ENCODE measurements at regions of chr19 and their contacts with region 1.

Region 1: DNA sequence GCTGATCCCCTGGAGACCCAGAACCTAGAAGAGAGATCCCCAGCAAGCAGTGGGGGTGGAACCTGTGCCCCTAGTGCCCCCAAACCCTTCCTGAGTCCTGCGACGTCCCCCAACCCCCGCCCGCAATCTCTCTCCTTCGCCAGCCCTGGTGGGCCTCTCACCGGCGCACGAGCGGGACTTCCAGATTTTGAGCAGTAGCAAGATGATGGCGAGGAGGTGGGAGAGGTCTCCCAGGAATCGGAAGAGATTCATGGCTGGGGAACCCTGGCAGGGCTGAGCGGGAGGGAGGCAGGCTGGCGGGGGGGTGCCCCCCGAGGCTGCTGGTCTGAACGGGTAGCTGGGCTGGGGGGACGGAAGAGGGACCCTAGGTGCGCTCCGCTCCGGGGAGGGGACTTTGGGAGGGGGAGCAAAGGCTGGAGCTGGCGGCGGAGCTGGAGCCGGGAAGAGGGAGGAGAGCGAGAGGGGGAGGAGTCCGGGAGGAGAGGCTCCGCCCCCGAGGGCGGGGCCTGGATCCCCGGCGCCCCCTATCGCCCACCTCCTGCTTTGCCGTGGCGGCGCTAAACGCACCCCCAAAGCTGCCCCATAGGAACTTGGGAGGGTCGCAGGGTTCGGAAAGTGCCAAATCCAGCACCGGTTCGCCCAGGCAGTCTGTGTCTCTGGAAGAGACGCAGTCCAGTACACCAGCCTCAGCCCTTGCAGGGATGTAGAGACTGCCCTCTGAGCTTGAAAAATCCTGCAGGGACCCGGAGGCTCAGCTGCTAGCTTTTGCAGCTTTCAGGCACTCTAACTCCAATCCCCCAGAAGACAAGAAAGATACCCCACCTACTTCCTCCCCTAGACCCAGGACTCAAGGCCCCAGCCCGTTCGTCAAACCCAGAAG is at the start of gene KDELR1:
- DNase-seq: peak; percentile 82
- ATAC-seq: peak; percentile 97
- total RNA-seq, gene KDELR1: 69.5 TPM

Region 2: DNA sequence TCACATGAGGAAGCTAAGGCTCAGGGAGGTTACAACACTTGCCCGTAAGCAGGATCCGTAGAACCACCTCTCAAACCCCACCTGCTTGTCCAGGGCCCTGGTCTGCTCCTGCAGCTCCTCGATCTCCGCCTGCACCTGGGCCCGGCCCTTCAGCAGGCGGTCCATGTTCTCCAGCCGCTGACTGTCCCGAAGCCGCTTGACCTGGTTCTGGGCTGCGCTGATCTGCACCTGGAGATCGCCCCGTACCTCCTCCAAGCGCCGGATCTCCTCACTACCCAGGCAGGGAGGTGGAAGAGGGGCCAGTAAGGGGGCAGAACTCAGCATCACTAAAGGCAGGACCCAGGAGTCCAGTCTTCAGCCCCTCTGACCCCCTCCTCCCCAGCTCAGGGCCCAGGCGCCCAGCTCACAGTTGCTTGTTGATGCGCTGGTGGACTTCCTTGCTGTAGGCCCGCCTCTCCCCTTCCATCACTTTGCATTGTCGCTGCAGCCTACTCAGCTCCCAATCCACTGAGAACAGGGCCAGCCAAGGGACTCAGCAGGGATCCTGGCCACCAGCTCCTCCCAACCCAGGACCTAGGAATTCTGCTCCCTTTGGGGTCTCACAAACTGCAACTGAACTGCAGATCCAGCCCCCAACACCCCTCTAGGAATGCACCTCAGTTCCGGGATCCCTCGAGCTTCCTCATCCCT is 72.9 kb before region 1 on chr19:
- intact Hi-C with region 1: loop called (anchors 5 kb)
- DNase-seq: no peak
- ATAC-seq: no peak